ENCODE measurements at regions of chr1 and their contacts with region 1.

Region 1: GRCh38 chr1:156090822-156091188 is 8.5 kb upstream of the MEX3A start:
- DNase-seq: peak; percentile 81 to 84
- H3K4me3 ChIP-seq: no peak overlapping the region
- H3K27ac ChIP-seq: no peak overlapping the region
- H3K4me1 ChIP-seq: peaks cover 31% of the 10 kb centered on the region
- H3K27me3 ChIP-seq: no peaks in the 10 kb centered on the region
- CTCF ChIP-seq: peak; percentile 92

Region 2: GRCh38 chr1:156445789-156446263 is 355.0 kb after region 1 on chr1:
- CTCF ChIA-PET with region 1: no interaction called
- POLR2A ChIA-PET with region 1: no interaction called
- intact Hi-C with region 1: loop called (anchors 5 kb)
- DNase-seq: peak; percentile 68 to 88
- H3K4me3 ChIP-seq: no peak overlapping the region
- H3K27ac ChIP-seq: no peak overlapping the region
- H3K4me1 ChIP-seq: no peaks in the 10 kb centered on the region
- H3K27me3 ChIP-seq: peaks cover 8% of the 10 kb centered on the region
- CTCF ChIP-seq: peak; percentile 98